Sciatic nerve (tissue), 2 donors: ENCODE measurements at regions of chr3 and their contacts with region 1.

Region 1: GRCh38 chr3:107651782-107652181 is 129.0 kb downstream of the BBX start:
- DNase-seq: no peak
- ATAC-seq: no peak

Region 2: GRCh38 chr3:107392549-107393165 is 259.1 kb before region 1 on chr3:
- intact Hi-C with region 1: no loop called
- DNase-seq: no peak
- ATAC-seq: no peak

Region 3: GRCh38 chr3:107488942-107489341 is 162.8 kb before region 1 on chr3:
- intact Hi-C with region 1: no loop called
- DNase-seq: no peak
- ATAC-seq: no peak

Region 4: GRCh38 chr3:108406661-108407206 is 755.0 kb after region 1 on chr3:
- intact Hi-C with region 1: loop called (anchors 10 kb)
- DNase-seq: no peak
- ATAC-seq: peak; percentile 77